K562 (cell line): ENCODE measurements at regions of chr2 and their contacts with region 1.

Region 1: GRCh38 chr2:111617299-111618225 is 266.4 kb downstream of the ANAPC1 start:
- DNase-seq: no peak
- ATAC-seq: no peak
- H3K4me3 ChIP-seq: no peak overlapping the region
- H3K27ac ChIP-seq: no peak overlapping the region
- H3K4me1 ChIP-seq: peaks cover 0 to 3% of the 10 kb centered on the region in 2 experiments; a peak in 1 of 5 replicates
- H3K27me3 ChIP-seq: no peaks in the 10 kb centered on the region
- CTCF ChIP-seq: no peak
- EP300 ChIP-seq: no peak
- POLR2A ChIP-seq: no peak
- RAD21 ChIP-seq: no peak

Region 2: DNA sequence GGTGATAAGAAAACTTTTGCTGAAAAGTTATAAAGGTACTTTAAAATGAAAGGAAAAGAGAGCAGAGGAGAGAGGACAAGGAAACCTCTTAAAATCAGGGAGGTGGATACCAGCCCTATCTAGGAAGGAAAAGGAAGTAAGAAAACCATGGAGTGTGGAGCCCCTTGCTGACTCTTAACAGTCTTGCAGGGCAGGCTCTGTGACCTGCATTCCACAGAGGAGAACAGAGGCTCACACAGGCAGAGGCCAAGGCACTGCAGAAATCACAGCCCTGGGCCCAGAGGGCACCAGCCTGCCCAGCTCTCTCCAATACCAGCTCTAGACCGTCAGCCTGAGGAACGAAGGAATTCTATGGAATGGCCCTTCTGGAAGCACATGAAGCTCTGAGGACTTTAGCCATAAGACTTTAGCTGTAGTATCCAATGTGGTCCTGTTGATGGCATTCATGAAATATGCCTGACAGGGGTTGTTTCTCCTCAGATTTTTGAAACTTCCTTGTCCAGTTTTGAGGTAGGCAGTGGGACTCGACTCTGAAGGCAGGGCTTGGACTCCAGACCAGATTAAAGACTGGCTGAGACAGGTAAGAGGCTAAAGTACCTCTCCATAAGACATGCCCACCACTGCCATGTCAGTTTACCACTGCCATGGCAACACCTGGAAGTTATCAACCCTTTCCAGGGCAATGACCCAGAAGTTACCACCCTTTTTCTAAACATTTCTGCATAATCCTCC is 50.1 kb after region 1 on chr2:
- CTCF ChIA-PET with region 1: no interaction called
- POLR2A ChIA-PET with region 1: no interaction called
- in situ Hi-C with region 1: no loop called
- intact Hi-C with region 1: loop called (anchors 2 kb)
- DNase-seq: peak in 1 of 4 experiments; percentile 37
- ATAC-seq: peak; percentile 77
- H3K4me3 ChIP-seq: no peak overlapping the region
- H3K27ac ChIP-seq: no peak overlapping the region
- H3K4me1 ChIP-seq: peaks cover 7 to 16% of the 10 kb centered on the region in 2 experiments; a peak in 4 of 5 replicates
- H3K27me3 ChIP-seq: no peaks in the 10 kb centered on the region
- CTCF ChIP-seq: peak; percentile 31 to 70 (median 41); a peak in 3 of 6 replicates
- EP300 ChIP-seq: no peak
- POLR2A ChIP-seq: no peak
- RAD21 ChIP-seq: peak; percentile 83 to 84

Region 3: GRCh38 chr2:112304298-112304941 is 686.9 kb after region 1 on chr2:
- CTCF ChIA-PET with region 1: no interaction called
- POLR2A ChIA-PET with region 1: no interaction called
- in situ Hi-C with region 1: no loop called
- intact Hi-C with region 1: no loop called
- DNase-seq: no peak
- ATAC-seq: no peak; the same call in 2 of the 3 replicates
- H3K4me3 ChIP-seq: no peak overlapping the region
- H3K27ac ChIP-seq: no peak overlapping the region
- H3K4me1 ChIP-seq: peaks cover 0 to 6% of the 10 kb centered on the region in 2 experiments; a peak in 1 of 5 replicates
- H3K27me3 ChIP-seq: no peaks in the 10 kb centered on the region
- CTCF ChIP-seq: no peak
- EP300 ChIP-seq: no peak
- POLR2A ChIP-seq: no peak
- RAD21 ChIP-seq: no peak

Region 4: GRCh38 chr2:112584134-112584890 is 966.8 kb after region 1 on chr2 and contains the start of gene CHCHD5:
- CTCF ChIA-PET with region 1: no interaction called
- POLR2A ChIA-PET with region 1: no interaction called
- in situ Hi-C with region 1: no loop called
- intact Hi-C with region 1: no loop called
- DNase-seq: peak; percentile 86 to 97 (median 90)
- ATAC-seq: peak; percentile 92
- H3K4me3 ChIP-seq: peak within 1 kb of the TSS; percentile 65
- H3K27ac ChIP-seq: peak within 1 kb of the TSS; percentile 96
- H3K4me1 ChIP-seq: peaks cover 16 to 19% of the 10 kb centered on the region in 2 experiments; a peak in 4 of 5 replicates
- H3K27me3 ChIP-seq: no peaks in the 10 kb centered on the region
- CTCF ChIP-seq: peak; percentile 5 to 38 (median 18); a peak in 3 of 6 replicates
- EP300 ChIP-seq: peak; percentile 65
- POLR2A ChIP-seq: peak; percentile 95
- RAD21 ChIP-seq: no peak
- polyA plus RNA-seq, gene CHCHD5: 56.0 to 79.3 TPM